ENCODE measurements at regions of chr3 and their contacts with region 1.

Region 1: GRCh38 chr3:161559177-161559998 is 62.8 kb downstream of the OTOL1 start:
- DNase-seq: peak; percentile 52
- H3K4me3 ChIP-seq: no peak overlapping the region
- H3K27ac ChIP-seq: no peak overlapping the region
- H3K4me1 ChIP-seq: no peaks in the 10 kb centered on the region
- CTCF ChIP-seq: peak; percentile 93

Region 2: DNA sequence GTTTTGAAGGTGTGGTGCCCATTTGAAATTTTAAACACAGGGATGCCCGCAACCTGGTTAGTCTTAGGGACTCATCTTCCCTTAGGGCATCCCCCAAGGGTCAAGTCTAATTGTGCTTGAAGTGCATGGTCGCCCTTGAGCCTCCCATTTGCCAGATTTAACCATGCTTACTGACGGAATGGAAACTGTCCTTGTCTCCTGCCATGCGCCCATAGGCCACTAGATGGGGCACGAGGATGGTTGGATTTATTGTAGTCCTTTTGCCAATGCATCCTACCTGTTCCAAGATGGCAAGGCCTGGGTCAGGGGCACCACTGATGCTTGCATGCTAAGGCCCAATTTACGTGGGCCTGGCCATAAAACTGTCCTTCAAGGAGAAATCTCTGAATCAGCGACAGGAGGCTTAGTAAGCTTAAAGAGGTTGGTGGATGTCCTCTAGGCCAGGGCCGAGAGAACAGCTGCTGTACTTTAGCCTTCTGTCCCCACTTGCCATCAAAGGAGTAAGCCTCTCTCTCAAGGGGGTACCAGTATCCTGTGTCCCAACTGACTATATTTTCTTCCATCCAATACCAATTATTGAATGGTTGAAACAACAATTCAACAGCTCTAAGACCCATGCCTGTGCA is 292.7 kb after region 1 on chr3:
- CTCF ChIA-PET with region 1: no interaction called
- POLR2A ChIA-PET with region 1: no interaction called
- intact Hi-C with region 1: loop called (anchors 10 kb)
- DNase-seq: peak; percentile 32
- H3K4me3 ChIP-seq: no peak overlapping the region
- H3K27ac ChIP-seq: no peak overlapping the region
- H3K4me1 ChIP-seq: no peaks in the 10 kb centered on the region
- CTCF ChIP-seq: peak; percentile 80

Measured in OCI-LY7 (cell line).